HEK293 (cell line): ENCODE measurements at regions of chr1 and their contacts with region 1.

Region 1: GRCh38 chr1:20696397-20697329 is 21.1 kb downstream of the KIF17 start:
- H3K4me3 ChIP-seq: peak overlapping the region; percentile 43
- H3K27ac ChIP-seq: peak overlapping the region; percentile 67
- H3K4me1 ChIP-seq: no peaks in the 10 kb centered on the region
- CTCF ChIP-seq: peak; percentile 92

Region 2: DNA sequence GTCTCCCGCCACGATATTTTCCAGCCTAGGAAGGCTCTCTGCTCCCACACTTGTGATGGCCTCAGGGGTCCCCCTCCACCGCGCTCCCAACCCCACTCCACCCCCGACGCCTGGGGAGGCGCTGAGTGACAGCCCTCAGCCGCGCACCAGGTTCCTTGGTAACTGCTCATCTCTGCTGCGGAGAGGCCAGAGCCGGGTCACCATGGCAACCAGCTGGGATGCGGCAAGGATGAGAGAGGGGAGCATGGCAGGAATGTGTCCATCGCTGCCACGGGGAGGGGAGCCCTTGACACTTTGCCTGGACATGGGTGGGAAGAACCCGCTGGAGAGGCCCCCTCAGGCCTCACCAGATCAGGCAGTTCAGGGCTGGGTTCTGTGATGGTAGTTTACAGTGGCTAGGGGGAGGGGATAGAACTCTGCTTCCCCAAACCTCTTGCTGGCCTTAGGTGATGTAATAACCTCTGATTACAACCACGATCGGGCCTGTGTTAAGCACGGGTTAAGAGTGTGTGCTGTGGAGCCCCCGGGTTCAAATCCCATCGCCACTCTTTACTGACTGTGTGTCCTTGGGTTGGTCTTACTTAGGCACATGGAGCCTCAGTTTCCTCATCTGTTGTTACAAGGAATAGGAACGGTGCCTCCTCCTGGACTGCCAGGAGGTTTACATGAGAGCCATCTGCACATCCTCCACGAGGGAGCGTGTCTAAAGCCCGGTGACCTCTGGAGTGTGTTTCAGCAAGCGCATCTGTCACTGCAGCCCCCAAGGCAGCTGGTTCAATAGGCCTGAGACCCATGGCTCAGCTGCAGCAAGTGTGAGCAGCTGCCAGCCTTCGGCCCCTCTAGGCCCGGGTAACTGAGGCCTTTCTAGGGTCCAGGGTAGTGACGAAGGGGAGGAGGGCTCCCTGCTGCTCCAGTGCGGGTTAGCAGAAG is 14.9 kb after region 1 on chr1:
- CTCF ChIA-PET with region 1: interaction called, 16 read pairs
- POLR2A ChIA-PET with region 1: interaction called, 4 read pairs
- H3K4me3 ChIP-seq: no peak overlapping the region
- H3K27ac ChIP-seq: no peak overlapping the region
- H3K4me1 ChIP-seq: no peaks in the 10 kb centered on the region
- CTCF ChIP-seq: no peak

Region 3: DNA sequence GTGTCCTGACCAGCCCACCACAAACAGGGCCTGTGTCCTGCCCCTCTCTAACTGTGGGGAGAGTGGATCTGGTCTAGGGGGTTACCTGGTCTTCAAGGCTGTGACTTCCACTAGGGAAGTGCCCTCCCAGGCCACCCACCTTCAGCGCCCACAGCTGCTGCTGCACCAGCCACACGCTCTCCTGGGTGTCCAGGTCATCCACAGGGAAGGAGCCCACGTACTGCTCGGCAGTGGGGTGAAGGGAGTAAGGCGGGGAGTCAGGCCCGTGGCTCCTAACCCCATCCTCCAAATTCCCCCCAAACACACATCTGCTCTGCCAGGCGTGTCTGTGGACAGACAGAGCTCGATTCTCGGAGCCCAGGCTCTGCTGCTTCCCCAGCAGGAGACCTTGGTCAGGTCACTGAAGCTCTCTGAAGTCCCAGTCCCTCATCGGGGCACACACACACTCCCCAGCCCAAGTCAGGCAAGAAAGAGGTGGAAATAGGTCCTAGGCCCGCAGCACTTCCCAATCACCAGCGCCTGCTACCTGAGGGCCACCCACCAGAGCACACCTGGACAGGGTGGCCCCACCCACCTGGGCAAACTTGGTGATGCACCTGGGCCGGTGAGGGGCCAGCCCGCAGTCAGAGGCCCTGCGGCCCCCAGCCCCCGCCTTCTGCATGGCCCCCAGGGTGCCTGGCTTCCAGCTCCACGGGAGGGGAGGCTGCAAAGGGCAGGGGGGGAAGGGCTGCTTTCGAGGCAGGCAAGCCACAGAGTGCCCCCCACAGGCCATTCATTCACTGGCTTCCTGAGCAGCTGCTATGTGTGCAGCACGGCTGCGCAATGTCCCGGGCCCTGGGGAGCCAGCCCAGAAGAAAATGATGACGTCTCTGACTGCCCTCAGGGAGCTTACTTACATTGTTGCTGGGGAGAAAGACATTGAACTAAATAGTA is 31.0 kb after region 1 on chr1:
- CTCF ChIA-PET with region 1: interaction called, 13 read pairs
- POLR2A ChIA-PET with region 1: interaction called, 4 read pairs
- H3K4me3 ChIP-seq: no peak overlapping the region
- H3K27ac ChIP-seq: no peak overlapping the region
- H3K4me1 ChIP-seq: peaks cover 4% of the 10 kb centered on the region
- CTCF ChIP-seq: no peak

Region 4: DNA sequence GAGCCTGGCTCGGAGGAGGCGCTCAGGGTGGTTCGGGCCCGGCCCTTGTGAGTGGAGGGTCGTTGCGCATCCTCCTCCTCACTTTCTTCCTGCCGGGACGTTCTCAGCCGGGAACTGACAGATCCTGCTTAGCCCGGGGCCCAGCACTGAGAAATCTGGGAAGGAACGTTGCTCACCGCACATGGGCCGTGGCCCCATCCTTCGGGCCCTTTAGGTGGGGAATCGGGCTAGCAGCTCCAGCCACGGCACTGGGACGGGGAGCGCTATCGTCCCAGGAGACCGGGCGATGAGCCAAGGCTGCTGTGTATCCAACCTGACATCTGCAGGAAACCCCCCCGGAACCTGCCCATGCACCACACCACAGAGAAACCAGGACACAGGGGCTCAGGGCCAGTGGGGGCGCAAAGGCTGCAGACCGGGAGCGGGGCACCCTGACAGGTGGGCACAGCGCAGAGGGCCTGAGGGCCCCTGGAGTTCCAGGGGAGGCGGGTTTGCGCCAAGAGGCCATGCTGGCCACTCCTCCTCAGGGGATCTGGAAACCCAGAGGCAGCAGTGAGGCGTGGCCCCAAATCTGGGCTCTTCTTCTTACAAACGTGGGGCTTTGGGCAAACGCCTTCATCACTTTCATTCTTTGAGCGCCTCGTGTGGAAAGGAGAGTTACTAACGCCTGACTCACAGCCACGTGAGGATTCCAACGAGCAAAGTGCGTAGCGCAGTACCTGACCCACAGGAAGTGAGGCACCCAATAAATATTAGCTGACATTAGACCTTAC is 36.1 kb after region 1 on chr1 and contains the start of gene SH2D5:
- CTCF ChIA-PET with region 1: interaction called, 13 read pairs
- POLR2A ChIA-PET with region 1: no interaction called
- H3K4me3 ChIP-seq: peak within 1 kb of the TSS; percentile 44
- H3K27ac ChIP-seq: no peak within 1 kb of the TSS; the same call in 1 of the 2 replicates
- H3K4me1 ChIP-seq: peaks cover 8% of the 10 kb centered on the region
- CTCF ChIP-seq: peak; percentile 56

Region 5: GRCh38 chr1:21192284-21192683 is 495.6 kb after region 1 on chr1:
- CTCF ChIA-PET with region 1: interaction called, 63 read pairs
- POLR2A ChIA-PET with region 1: no interaction called
- H3K4me3 ChIP-seq: no peak overlapping the region
- H3K27ac ChIP-seq: no peak overlapping the region
- H3K4me1 ChIP-seq: no peaks in the 10 kb centered on the region
- CTCF ChIP-seq: no peak